ENCODE measurements at regions of chr17 and their contacts with region 1.

Region 1: GRCh38 chr17:2844416-2844815 is 48.2 kb downstream of the RAP1GAP2 start:
- DNase-seq: no peak
- ATAC-seq: no peak; the same call in 1 of the 2 replicates
- H3K4me3 ChIP-seq: no peak overlapping the region
- H3K27ac ChIP-seq: no peak overlapping the region
- H3K4me1 ChIP-seq: no peaks in the 10 kb centered on the region; the same call in 1 of the 2 replicates
- H3K27me3 ChIP-seq: no peaks in the 10 kb centered on the region
- CTCF ChIP-seq: no peak

Region 2: DNA sequence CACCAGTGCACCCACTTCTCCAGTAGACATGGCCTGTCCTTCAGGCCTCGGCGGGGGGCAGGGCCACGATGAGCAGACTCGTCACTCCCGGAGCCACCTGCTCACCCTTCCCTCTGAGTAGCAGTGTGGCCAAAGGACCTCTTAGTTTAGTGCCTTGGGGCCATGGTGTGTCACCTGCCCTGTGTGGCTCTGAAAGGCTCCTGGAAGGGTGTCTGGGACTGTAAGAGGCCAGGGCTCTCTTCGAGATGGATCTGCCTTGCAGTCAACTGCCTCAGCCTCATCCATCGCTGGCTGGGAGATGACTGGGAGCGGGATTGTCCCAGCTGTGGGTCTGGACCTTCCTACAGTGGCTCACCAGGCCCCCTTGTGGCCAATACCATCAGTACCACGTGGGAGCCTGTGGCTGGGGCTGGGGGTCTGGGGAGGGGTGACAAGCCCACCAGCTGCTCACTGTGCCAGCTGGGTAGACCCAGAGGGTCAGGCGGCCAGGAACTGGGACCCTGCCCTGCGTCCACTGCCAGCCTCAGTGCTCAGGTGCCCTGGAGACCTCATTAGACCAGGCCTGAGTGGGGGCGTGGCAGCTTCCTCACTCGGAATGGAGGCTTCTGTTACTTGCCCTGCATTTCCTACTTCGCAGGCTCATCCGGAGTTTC is 85.6 kb after region 1 on chr17:
- CTCF ChIA-PET with region 1: no interaction called
- POLR2A ChIA-PET with region 1: interaction called, 4 read pairs
- in situ Hi-C with region 1: no loop called
- intact Hi-C with region 1: loop called (anchors 10 kb)
- DNase-seq: no peak
- ATAC-seq: peak; percentile 89
- H3K4me3 ChIP-seq: no peak overlapping the region
- H3K27ac ChIP-seq: no peak overlapping the region
- H3K4me1 ChIP-seq: no peaks in the 10 kb centered on the region
- H3K27me3 ChIP-seq: no peaks in the 10 kb centered on the region
- CTCF ChIP-seq: peak; percentile 89

Region 3: GRCh38 chr17:3626831-3627768 is 782.7 kb after region 1 on chr17:
- CTCF ChIA-PET with region 1: no interaction called
- POLR2A ChIA-PET with region 1: no interaction called
- in situ Hi-C with region 1: no loop called
- intact Hi-C with region 1: no loop called
- DNase-seq: no peak
- ATAC-seq: no peak
- H3K4me3 ChIP-seq: no peak overlapping the region
- H3K27ac ChIP-seq: no peak overlapping the region
- H3K4me1 ChIP-seq: no peaks in the 10 kb centered on the region
- H3K27me3 ChIP-seq: no peaks in the 10 kb centered on the region
- CTCF ChIP-seq: no peak